Dorsolateral prefrontal cortex (tissue), 120 donors: ENCODE measurements at regions of chr14 and their contacts with region 1.

Region 1: DNA sequence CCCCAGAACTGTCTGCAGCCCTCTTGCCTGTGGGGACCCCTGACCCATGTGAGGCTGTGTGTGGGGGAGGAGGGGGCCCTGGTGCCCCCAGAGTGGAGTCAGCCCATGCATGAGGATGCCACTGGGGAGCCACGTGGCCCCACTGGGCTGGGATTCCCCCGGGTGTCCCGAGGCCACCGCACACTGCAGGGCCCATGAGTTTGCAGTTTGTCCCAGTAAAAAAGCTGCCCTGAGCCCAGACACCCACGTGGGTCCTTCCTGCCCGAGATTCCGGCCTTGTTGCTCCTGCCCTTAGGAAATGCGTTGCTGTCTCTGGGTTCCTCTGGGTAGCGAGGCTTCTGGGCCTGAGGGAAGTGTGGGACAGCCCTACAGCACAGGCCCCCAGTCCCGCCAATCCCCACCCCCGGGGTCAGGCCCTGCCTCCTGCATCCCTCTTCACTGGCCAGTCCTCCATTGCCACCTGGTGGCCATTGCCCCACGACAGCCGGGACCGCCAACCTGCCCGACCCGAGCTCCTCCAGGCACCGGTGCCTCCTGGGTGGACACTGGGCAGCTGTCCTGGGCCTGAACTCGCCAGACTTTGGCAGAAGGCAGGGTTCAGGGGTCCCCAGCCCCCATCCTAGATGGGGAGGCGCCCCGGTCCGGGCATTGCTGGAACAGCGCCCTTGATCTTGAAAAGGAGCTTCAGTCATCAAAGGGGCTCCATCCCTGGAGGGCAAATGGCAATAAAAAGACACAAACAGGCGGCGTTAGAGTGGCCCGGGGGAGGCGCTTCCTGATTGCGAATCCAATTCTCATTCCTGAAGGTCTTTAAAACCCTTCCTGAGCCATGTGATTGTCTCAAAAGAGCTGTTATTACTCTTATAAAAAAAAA is 15.6 kb upstream of the C14orf180 start:
- DNase-seq: peak; percentile 57 to 85 (median 69)
- H3K4me3 ChIP-seq: peak overlapping the region in 1 of 59 donors; percentile 15
- H3K27ac ChIP-seq: no peak overlapping the region
- H3K27me3 ChIP-seq: peaks cover 0 to 26% (median 0%) of the 10 kb centered on the region in 45 donors
- CTCF ChIP-seq: peak; percentile 53 to 95 (median 87)

Region 2: DNA sequence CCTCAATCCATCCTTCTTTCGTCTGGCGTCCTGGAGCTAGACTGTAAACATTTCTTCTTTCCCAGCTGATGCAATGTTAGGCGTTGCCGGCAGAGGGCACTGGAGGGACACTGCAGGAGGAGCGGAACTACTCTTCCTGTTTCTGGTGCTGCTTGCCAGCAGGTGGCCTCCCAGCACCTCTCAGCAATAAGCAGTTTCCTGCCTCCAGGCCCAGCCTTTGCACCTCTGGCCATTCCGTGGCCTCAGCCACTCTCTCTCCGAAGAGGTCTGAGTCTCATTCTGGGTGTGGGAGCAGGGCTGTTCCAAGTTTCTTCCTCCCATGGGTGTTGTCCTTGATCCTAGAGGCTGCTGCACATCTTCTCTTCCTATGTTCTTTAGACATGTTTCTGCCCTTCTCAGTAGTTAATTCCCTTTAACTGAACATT is 485.9 kb before region 1 on chr14:
- intact Hi-C with region 1: loop called in 1 of 2 experiments (anchors 5 kb)
- DNase-seq: peak; percentile 73 to 92 (median 86)
- H3K4me3 ChIP-seq: peak overlapping the region in 2 of 59 donors; percentile 20 to 30
- H3K27ac ChIP-seq: no peak overlapping the region
- H3K27me3 ChIP-seq: peaks cover 0 to 9% (median 0%) of the 10 kb centered on the region in 45 donors
- CTCF ChIP-seq: peak; percentile 81 to 100 (median 99)

Region 3: DNA sequence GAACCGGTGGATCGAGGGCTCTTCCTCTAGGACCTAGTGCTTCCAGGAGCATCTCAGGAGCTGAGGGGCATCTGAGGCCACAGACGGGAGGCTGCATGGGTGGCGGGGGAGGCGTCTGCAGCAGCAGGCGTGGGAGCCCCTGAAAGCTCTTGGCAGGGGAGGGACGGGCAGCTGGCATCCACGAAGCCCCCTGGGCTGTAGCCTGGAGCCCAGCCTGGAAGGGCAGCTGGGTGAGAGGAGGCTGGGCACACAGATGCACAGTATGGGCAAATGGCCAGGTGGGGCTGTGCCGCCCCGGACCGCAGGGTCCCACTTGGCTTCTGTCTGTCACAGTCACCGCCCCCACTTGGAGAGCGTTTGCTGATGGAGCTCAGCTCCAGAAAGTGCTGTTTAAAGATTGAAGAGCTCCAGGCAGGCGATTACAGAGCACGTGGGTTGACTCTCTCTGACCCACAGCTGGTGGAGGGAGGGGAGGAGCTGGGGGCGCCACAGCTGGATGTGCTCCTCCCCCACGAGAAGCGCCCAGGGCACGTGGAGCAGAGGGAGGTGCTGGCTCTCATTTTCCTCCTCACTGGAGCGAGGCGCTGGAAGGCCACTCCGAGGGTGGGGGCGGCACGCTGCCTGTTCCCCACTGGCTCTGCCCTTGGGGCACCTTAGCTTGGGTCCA is 139.4 kb before region 1 on chr14:
- intact Hi-C with region 1: loop called in 1 of 2 experiments (anchors 10 kb)
- DNase-seq: peak in 7 of 10 donors; percentile 43 to 65 (median 54)
- H3K4me3 ChIP-seq: peak overlapping the region in 7 of 59 donors; percentile 11 to 42 (median 20)
- H3K27ac ChIP-seq: peak overlapping the region in 9 of 59 donors; percentile 9 to 64 (median 26)
- H3K27me3 ChIP-seq: peaks cover 0 to 6% (median 0%) of the 10 kb centered on the region in 45 donors
- CTCF ChIP-seq: no peak

Region 4: GRCh38 chr14:104749111-104749649 is 185.2 kb after region 1 on chr14:
- intact Hi-C with region 1: no loop called
- DNase-seq: peak in 8 of 10 donors; percentile 56 to 83 (median 75)
- H3K4me3 ChIP-seq: peak overlapping the region in 5 of 59 donors; percentile 2 to 11 (median 4)
- H3K27ac ChIP-seq: peak overlapping the region in 55 of 59 donors; percentile 2 to 87 (median 71)
- H3K27me3 ChIP-seq: no peaks in the 10 kb centered on the region
- CTCF ChIP-seq: peak in 1 of 56 donors; percentile 9